ENCODE measurements at regions of chr7 and their contacts with region 1.

Region 1: GRCh38 chr7:143240291-143241168 is 18.7 kb downstream of the TAS2R40 start:
- DNase-seq: no peak
- ATAC-seq: peak; percentile 92 to 95
- H3K4me3 ChIP-seq: no peak overlapping the region
- H3K27ac ChIP-seq: peak overlapping the region; percentile 61
- H3K4me1 ChIP-seq: no peaks in the 10 kb centered on the region
- H3K27me3 ChIP-seq: no peaks in the 10 kb centered on the region
- CTCF ChIP-seq: peak; percentile 91

Region 2: DNA sequence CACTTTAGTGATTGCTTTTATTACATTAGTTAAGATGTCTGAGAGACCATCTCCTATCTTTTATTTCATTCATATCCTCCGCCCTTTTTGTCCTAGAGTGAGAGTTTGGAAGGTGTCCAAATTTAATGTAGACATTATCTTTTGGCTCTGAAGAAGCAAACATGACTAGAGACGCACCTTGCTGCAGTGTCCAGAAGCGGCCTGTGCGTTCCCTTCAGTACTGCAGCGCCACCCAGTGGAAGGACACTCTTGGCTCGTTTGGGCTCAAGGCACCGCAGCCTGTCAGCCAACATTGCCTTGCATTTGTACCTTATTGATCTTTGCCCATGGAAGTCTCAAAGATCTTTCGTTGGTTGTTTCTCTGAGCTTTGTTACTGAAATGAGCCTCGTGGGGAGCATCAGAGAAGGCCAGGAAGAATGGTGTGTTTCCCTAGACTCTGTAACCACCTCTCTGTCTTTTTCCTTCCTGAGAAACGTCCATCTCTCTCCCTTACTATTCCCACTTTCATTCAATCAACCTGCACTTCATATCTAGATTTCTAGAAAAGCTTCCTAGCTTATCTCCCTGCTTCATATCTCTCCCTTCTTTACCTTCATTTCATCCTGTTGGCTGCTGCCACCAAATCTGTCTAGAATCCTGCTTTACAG is 65.0 kb after region 1 on chr7:
- intact Hi-C with region 1: loop called (anchors 5 kb)
- DNase-seq: peak; percentile 86
- ATAC-seq: peak; percentile 70 to 74
- H3K4me3 ChIP-seq: no peak overlapping the region
- H3K27ac ChIP-seq: no peak overlapping the region
- H3K4me1 ChIP-seq: peaks cover 18% of the 10 kb centered on the region
- H3K27me3 ChIP-seq: no peaks in the 10 kb centered on the region
- CTCF ChIP-seq: peak; percentile 75

Region 3: DNA sequence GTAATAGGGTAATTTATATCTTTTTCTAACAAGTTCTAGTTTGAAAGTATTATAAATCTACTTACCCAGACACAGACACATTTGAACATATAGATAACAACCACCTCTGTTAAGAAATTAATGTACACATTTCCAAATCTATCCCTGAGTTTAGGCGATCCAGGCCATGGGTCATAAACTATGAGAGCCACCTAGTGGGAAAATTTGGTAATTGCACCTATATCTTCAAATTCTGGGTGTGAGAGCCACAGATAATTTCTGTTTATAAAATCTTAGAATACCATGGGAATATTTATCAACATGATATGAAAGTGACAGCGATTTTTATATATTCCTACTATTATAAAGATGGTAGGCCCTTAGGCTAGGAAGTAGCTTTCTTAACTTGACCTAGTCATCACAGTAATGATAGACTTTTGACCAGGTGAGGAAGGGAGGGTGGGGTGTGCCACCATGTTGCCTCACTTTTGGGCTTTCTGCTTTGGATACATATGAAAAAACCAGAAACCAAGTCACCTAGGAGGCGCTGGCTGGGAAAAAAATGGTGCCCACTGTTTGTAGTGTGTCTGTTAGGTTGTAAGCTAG is 176.1 kb after region 1 on chr7:
- intact Hi-C with region 1: loop called (anchors 10 kb)
- DNase-seq: no peak
- ATAC-seq: peak; percentile 58 to 79
- H3K4me3 ChIP-seq: no peak overlapping the region
- H3K27ac ChIP-seq: no peak overlapping the region
- H3K4me1 ChIP-seq: peaks cover 8% of the 10 kb centered on the region
- H3K27me3 ChIP-seq: no peaks in the 10 kb centered on the region
- CTCF ChIP-seq: peak; percentile 75